Aorta (tissue), 5 donors: ENCODE measurements at regions of chr20 and their contacts with region 1.

Region 1: DNA sequence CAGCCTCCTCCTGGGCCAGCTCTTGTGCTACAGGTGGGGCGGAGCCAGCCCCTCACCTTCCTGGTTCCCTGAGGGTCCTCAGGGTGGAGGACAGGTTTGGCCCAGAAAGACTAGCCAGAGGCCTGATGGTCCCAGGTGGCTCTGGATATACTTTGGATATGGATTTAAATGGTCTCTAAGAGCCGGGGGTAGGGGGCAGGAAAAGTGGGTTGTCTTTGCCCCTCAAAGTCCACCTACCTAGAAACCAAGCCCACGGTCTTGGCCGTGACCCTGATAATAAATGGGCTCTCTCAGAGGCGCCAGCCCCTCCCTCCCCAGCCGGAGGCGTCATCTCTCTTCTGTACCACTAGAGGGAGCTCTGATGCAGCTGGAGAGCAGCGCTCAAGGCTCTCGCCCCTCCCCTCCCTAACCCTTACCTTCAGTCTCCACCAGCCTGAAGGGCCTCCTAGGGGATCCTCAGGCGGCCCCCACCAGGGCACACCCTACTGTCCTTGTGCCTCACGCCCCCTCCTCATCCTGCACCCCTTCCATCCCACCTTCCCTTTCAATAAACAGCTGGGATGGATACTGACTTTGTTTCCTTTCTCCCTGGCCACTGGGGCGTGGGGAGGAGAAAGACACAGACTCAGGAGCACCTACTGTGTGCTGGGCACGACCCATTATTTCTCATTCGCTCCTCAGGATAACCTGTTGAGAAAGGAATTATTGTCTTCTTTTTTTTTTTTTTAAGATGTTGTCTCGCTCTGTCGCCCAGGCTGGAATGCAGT is 7.6 kb downstream of the NRSN2 start:
- DNase-seq: peak; percentile 77 to 89
- ATAC-seq: peak; percentile 95
- H3K4me3 ChIP-seq: no peak overlapping the region
- H3K27ac ChIP-seq: no peak overlapping the region
- H3K4me1 ChIP-seq: no peaks in the 10 kb centered on the region
- H3K27me3 ChIP-seq: no peaks in the 10 kb centered on the region

Region 2: GRCh38 chr20:431012-431904 is 76.8 kb after region 1 on chr20:
- intact Hi-C with region 1: loop called (anchors 5 kb)
- DNase-seq: peak in 1 of 2 donors; percentile 74
- ATAC-seq: peak; percentile 30
- H3K4me3 ChIP-seq: no peak overlapping the region
- H3K27ac ChIP-seq: no peak overlapping the region
- H3K4me1 ChIP-seq: no peaks in the 10 kb centered on the region
- H3K27me3 ChIP-seq: no peaks in the 10 kb centered on the region

Region 3: DNA sequence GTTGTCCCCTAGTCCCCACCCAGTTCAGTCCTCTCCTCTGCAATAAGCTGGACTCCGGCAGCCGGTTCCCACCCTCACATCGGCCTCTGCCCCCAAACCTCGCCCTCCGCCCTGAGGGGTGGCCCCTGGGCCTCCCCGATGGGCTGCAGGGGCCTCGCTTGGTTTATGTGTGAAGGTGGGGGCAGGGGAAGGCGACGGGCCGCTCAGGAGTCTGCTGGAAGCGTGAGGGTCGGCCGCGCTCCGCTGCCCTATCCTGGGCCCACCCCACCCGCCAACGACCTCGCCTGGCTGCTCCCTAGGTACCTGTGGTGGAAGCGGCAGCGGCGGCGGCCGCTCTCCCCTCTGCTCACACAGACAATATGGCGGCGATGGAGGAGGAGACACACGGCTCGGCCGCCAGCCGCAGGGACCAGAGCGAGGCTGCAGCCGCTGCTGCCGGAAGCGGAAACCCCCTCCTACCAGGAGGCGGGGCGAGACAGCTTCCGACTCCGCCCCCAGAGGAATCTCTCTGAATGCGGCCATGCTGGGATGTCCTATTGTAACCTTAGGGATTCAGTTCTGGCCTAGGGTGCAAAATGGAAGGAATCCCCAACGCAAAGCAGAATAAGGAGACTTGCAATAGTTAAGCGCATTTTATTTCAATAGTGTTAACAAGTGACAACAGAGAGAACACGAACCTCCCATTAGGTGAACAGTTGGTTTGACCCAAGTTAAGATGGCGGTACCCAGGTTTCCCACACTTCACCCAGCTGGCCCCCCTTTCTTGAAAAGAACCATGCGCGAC is 189.1 kb after region 1 on chr20 and contains the start of gene CSNK2A1:
- intact Hi-C with region 1: loop called (anchors 5 kb)
- DNase-seq: peak; percentile 96 to 97
- ATAC-seq: peak; percentile 99
- H3K4me3 ChIP-seq: peak within 1 kb of the TSS; percentile 90 to 99
- H3K27ac ChIP-seq: peak within 1 kb of the TSS in 1 of 2 donors; percentile 91
- H3K4me1 ChIP-seq: peaks cover 0 to 8% of the 10 kb centered on the region in 2 donors
- H3K27me3 ChIP-seq: no peaks in the 10 kb centered on the region
- total RNA-seq, gene CSNK2A1: 73.5 to 98.2 TPM

Region 4: DNA sequence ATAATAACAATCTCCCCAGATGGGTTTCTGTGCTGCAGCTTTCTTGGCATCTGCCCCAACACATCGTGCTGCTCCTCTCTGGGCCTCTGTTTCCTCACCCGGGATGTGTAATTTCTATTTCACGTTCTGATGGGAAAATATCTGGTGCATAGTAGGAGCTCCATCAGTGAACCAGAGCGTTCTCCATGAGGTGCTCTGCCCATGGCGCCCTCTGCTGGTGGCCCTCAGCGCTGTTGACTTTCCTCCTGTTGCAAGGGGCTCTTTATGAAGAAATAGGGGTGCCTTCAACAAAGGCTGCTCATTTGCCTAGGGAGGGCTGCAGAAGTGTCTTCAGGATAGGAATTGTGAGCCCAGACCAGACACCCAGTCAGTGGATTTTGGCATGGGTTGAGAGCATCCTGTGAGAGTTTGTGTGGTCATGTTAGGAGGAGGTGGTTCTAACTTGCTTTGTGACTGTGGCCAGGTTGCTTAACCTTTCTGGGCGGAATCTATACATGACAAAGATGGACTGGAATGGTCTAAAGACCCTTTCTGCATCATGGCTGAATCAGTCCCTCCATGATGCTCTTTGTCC is 313.0 kb after region 1 on chr20:
- intact Hi-C with region 1: loop called in 1 of 2 experiments (anchors 5 kb)
- DNase-seq: peak; percentile 70 to 87
- ATAC-seq: no peak
- H3K4me3 ChIP-seq: no peak overlapping the region
- H3K27ac ChIP-seq: no peak overlapping the region
- H3K4me1 ChIP-seq: no peaks in the 10 kb centered on the region
- H3K27me3 ChIP-seq: no peaks in the 10 kb centered on the region

Region 5: GRCh38 chr20:825710-826421 is 471.4 kb after region 1 on chr20:
- intact Hi-C with region 1: no loop called
- DNase-seq: no peak
- ATAC-seq: peak; percentile 35
- H3K4me3 ChIP-seq: no peak overlapping the region
- H3K27ac ChIP-seq: no peak overlapping the region
- H3K4me1 ChIP-seq: no peaks in the 10 kb centered on the region
- H3K27me3 ChIP-seq: no peaks in the 10 kb centered on the region